ENCODE measurements at regions of chr6 and their contacts with region 1.

Region 1: DNA sequence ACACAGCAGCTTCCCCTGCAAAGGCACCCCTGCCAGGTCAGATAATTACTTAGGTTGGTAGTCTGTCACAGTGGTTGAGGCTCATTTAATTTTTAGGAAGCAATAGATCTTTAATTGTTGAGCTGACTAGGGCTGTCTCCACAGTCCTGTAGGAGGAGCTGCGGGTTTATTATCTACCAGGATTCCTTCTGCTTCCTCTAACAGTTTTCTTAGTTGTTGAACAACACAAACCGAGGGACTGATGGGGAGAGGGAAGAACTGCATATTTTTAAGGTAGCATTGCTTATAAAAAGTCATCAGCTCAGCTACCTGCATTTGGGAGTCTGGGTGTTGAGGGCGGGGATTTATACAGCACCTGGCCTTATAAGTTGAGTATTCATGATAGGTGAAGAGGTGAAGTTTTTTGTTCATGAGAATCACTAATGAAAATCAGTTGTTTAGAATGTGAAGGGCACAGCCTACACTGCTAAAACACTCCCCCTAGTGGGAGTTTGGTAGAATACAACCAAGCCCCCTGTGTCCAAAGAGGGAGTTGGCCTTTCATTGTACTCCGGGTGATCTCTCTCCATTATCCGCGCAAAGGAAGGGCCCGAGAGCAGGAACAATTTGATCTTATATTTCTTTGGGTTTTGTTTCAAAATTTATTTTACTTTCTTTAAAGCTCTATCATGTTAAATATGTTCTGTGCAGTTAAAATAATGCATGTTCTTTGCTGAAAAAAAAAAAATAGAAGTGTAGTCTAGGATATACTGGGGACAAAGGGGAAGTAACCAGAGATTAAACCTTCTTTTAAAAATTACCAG is 69.6 kb downstream of the SSR1 start:
- DNase-seq: peak; percentile 64
- ATAC-seq: peak; percentile 82
- H3K4me3 ChIP-seq: no peak overlapping the region
- H3K27ac ChIP-seq: peak overlapping the region; percentile 49; the same call in 1 of the 2 replicates
- H3K4me1 ChIP-seq: peaks cover 11% of the 10 kb centered on the region
- H3K27me3 ChIP-seq: no peaks in the 10 kb centered on the region
- CTCF ChIP-seq: peak; percentile 90
- POLR2A ChIP-seq: no peak
- RAD21 ChIP-seq: peak; percentile 86

Region 2: GRCh38 chr6:6676910-6677441 is 566.4 kb before region 1 on chr6:
- CTCF ChIA-PET with region 1: interaction called, 3 read pairs
- POLR2A ChIA-PET with region 1: no interaction called
- dilution Hi-C with region 1: no loop called
- in situ Hi-C with region 1: loop called (anchors 10 kb)
- intact Hi-C with region 1: loop called (anchors 1 kb)
- DNase-seq: peak; percentile 69
- ATAC-seq: peak; percentile 98
- H3K4me3 ChIP-seq: no peak overlapping the region
- H3K27ac ChIP-seq: no peak overlapping the region
- H3K4me1 ChIP-seq: peaks cover 2% of the 10 kb centered on the region; the same call in 1 of the 2 replicates
- H3K27me3 ChIP-seq: no peaks in the 10 kb centered on the region; the same call in 1 of the 2 replicates
- CTCF ChIP-seq: peak; percentile 90
- POLR2A ChIP-seq: no peak
- RAD21 ChIP-seq: peak; percentile 88

Region 3: DNA sequence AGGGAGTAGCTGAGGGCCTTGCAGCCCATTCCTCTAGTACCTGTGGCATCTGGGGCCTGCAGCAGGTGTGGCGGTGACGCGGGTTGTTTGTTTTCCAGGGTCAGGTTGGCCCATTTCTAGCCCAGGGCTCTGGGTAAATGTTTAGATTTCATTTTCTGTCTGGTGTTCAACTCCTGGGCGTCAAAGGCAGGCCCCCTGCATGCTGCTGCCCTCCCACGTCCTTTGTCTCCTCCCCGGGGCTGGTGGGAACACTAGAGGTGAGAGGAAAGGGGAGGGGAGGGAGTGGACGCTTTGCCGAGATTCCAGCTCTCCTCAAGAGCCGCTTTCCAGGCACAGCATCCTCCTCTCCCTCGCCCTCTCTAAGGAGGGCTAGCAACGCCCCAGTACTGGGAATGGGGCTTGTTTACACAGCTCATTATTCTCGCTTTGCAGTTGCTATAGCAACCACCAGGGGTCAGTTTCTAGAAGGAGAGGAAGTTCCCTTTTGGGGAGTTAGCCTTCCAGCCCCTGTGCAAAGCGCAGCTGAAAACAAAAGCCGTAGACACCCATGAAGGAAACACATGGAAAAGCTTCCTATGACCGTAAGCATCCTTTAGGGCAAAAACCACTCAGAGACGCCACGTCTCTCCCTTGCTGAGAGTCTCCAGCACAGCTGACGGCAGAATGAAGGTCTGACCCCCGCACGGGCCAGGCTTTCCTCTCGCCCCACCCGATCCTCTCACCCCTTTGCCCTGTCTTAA is 484.3 kb before region 1 on chr6:
- CTCF ChIA-PET with region 1: no interaction called
- POLR2A ChIA-PET with region 1: no interaction called
- dilution Hi-C with region 1: no loop called
- in situ Hi-C with region 1: no loop called
- intact Hi-C with region 1: loop called (anchors 1 kb)
- DNase-seq: peak; percentile 61
- ATAC-seq: peak; percentile 96
- H3K4me3 ChIP-seq: no peak overlapping the region
- H3K27ac ChIP-seq: no peak overlapping the region
- H3K4me1 ChIP-seq: peaks cover 2% of the 10 kb centered on the region; the same call in 1 of the 2 replicates
- H3K27me3 ChIP-seq: no peaks in the 10 kb centered on the region
- CTCF ChIP-seq: peak; percentile 51
- POLR2A ChIP-seq: no peak
- RAD21 ChIP-seq: peak; percentile 58

Region 4: DNA sequence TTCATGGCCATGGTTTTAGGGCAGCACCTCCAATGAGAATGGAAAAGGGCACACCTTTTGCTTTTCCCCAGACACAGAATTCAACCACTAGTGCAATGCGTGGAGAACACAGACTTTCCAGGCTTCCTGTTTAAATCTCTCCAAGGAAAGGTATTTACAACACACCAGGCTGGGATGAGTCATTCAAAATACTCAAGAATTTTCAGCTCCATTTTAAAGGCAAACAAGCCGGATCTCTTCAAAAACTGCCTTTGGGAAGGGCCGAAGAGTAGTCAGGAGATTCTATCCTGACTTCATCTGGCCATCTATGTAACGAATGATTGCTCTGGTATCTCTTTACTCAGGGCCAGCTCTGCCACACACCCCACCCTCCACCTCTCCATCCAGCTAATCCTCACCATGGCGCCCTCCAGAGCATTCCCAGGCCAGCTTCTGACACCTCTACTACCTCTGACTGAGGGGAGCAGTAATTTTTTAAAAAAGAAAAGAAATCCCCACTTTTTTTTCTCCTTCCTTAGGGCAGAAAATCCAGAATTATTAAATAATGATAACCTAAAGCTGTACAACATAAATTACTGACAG is 400.2 kb before region 1 on chr6:
- CTCF ChIA-PET with region 1: interaction called, 11 read pairs
- POLR2A ChIA-PET with region 1: no interaction called
- dilution Hi-C with region 1: no loop called
- in situ Hi-C with region 1: no loop called
- intact Hi-C with region 1: no loop called
- DNase-seq: peak; percentile 58
- ATAC-seq: peak; percentile 60
- H3K4me3 ChIP-seq: no peak overlapping the region
- H3K27ac ChIP-seq: peak overlapping the region; percentile 59; the same call in 1 of the 2 replicates
- H3K4me1 ChIP-seq: peaks cover 6% of the 10 kb centered on the region
- H3K27me3 ChIP-seq: peaks cover 3% of the 10 kb centered on the region
- CTCF ChIP-seq: no peak
- POLR2A ChIP-seq: no peak
- RAD21 ChIP-seq: no peak

Region 5: GRCh38 chr6:6918216-6918983 is 325.0 kb before region 1 on chr6:
- CTCF ChIA-PET with region 1: no interaction called
- POLR2A ChIA-PET with region 1: no interaction called
- dilution Hi-C with region 1: no loop called
- in situ Hi-C with region 1: no loop called
- intact Hi-C with region 1: loop called (anchors 10 kb)
- DNase-seq: peak; percentile 59
- ATAC-seq: no peak
- H3K4me3 ChIP-seq: no peak overlapping the region
- H3K27ac ChIP-seq: no peak overlapping the region
- H3K4me1 ChIP-seq: no peaks in the 10 kb centered on the region
- H3K27me3 ChIP-seq: no peaks in the 10 kb centered on the region; the same call in 1 of the 2 replicates
- CTCF ChIP-seq: no peak
- POLR2A ChIP-seq: no peak
- RAD21 ChIP-seq: no peak

Region 6: DNA sequence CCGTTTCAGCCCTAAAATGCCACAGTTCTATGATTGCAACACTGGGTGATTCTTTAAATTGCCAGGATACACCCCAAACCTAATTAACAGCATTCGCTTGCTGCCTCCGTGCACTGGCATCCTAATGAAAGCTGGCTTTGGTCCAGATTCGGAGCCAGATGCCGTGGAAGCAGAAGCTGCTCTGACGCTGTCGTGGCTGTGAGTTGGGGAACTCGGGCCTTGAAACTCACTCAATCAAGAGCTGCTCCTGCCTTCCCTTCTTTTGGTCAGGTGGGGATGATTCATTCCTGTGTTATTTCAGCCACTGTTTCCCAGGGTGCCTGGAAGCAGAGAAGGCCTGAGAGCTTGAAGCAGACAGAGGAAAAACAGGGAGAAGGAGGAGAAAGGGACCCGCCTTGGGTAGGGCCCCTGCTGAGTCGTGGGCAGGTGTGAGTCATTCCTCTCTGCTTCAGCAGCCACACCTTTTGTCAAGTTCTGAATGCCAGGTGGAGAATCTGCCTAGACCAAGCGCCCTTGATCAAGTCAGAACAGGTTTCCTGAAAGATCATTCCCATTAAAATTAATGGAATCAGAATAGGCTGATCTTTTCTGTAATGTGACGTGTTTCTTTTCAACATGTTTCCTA is 261.9 kb after region 1 on chr6:
- CTCF ChIA-PET with region 1: no interaction called
- POLR2A ChIA-PET with region 1: no interaction called
- dilution Hi-C with region 1: no loop called
- in situ Hi-C with region 1: no loop called
- intact Hi-C with region 1: no loop called
- DNase-seq: peak; percentile 85
- ATAC-seq: peak; percentile 42
- H3K4me3 ChIP-seq: no peak overlapping the region; the same call in 1 of the 2 replicates
- H3K27ac ChIP-seq: no peak overlapping the region
- H3K4me1 ChIP-seq: peaks cover 5% of the 10 kb centered on the region
- H3K27me3 ChIP-seq: no peaks in the 10 kb centered on the region
- CTCF ChIP-seq: no peak
- POLR2A ChIP-seq: no peak
- RAD21 ChIP-seq: no peak

Region 7: GRCh38 chr6:7640607-7641577 is 397.5 kb after region 1 on chr6:
- CTCF ChIA-PET with region 1: no interaction called
- POLR2A ChIA-PET with region 1: no interaction called
- dilution Hi-C with region 1: no loop called
- in situ Hi-C with region 1: no loop called
- intact Hi-C with region 1: no loop called
- DNase-seq: peak; percentile 87
- ATAC-seq: peak; percentile 81
- H3K4me3 ChIP-seq: no peak overlapping the region
- H3K27ac ChIP-seq: peak overlapping the region; percentile 30; the same call in 1 of the 2 replicates
- H3K4me1 ChIP-seq: peaks cover 9% of the 10 kb centered on the region
- H3K27me3 ChIP-seq: no peaks in the 10 kb centered on the region
- CTCF ChIP-seq: no peak
- POLR2A ChIP-seq: no peak
- RAD21 ChIP-seq: no peak